Activated B cell treated with CpG ODN at 0.5 μM for 24 hours (primary cell): ENCODE measurements at regions of chr14 and their contacts with region 1.

Region 1: GRCh38 chr14:68788996-68789820 is 3.7 kb downstream of the ZFP36L1 start:
- DNase-seq: peak; percentile 62
- ATAC-seq: no peak
- H3K4me3 Mint-ChIP-seq: peak overlapping the region; percentile 100
- H3K27ac Mint-ChIP-seq: peak overlapping the region; percentile 99
- H3K4me1 Mint-ChIP-seq: peaks cover 54% of the 10 kb centered on the region
- H3K27me3 Mint-ChIP-seq: no peaks in the 10 kb centered on the region
- CTCF ChIP-seq: no peak

Region 2: GRCh38 chr14:68307014-68307789 is 482.0 kb before region 1 on chr14:
- CTCF ChIA-PET with region 1: no interaction called
- POLR2A ChIA-PET with region 1: interaction called, 43 read pairs
- intact Hi-C with region 1: no loop called
- DNase-seq: no peak
- ATAC-seq: no peak
- H3K4me3 Mint-ChIP-seq: no peak overlapping the region
- H3K27ac Mint-ChIP-seq: peak overlapping the region; percentile 84
- H3K4me1 Mint-ChIP-seq: peaks cover 72% of the 10 kb centered on the region
- H3K27me3 Mint-ChIP-seq: no peaks in the 10 kb centered on the region
- CTCF ChIP-seq: no peak

Region 3: GRCh38 chr14:68520637-68521556 is 268.3 kb before region 1 on chr14:
- CTCF ChIA-PET with region 1: no interaction called
- POLR2A ChIA-PET with region 1: interaction called, 585 read pairs
- intact Hi-C with region 1: no loop called
- DNase-seq: no peak
- ATAC-seq: no peak
- H3K4me3 Mint-ChIP-seq: no peak overlapping the region
- H3K27ac Mint-ChIP-seq: no peak overlapping the region
- H3K4me1 Mint-ChIP-seq: peaks cover 56% of the 10 kb centered on the region
- H3K27me3 Mint-ChIP-seq: no peaks in the 10 kb centered on the region
- CTCF ChIP-seq: no peak

Region 4: GRCh38 chr14:68676511-68676943 is 112.7 kb before region 1 on chr14:
- CTCF ChIA-PET with region 1: no interaction called
- POLR2A ChIA-PET with region 1: interaction called, 10 read pairs
- intact Hi-C with region 1: no loop called
- DNase-seq: no peak
- ATAC-seq: no peak
- H3K4me3 Mint-ChIP-seq: no peak overlapping the region
- H3K27ac Mint-ChIP-seq: peak overlapping the region; percentile 61
- H3K4me1 Mint-ChIP-seq: peaks cover 63% of the 10 kb centered on the region
- H3K27me3 Mint-ChIP-seq: no peaks in the 10 kb centered on the region
- CTCF ChIP-seq: no peak

Region 5: DNA sequence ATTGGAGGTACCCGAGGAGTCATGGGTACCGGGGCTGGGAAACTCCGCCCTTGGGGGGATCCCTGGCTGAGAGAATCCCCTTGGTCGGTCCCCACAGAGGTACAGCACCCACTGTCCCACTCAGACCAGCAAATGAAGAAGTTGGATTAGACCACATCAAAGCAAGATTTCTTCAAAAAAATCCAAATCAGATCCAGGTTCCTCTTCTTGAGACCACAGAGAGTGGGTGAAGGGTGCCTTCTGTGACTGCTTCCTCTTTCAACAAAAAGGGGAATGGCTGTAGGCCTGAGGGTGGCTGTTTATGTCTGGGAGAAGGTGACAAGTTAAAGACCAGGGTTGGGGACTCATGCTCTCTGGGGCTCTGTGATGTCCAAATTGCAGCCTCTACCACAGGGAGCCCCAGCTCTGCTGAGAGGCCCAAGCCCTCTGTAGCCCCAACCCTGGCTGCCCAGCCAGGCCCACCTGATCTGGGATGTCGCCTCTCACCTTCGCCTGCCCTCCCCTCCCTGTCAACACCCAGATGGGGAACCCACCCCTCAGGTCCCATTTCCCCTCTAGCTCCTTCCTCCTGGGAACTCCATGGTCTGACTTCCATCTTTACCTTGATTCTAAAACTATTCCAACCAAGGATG is 47.3 kb before region 1 on chr14:
- CTCF ChIA-PET with region 1: no interaction called
- POLR2A ChIA-PET with region 1: interaction called, 28 read pairs
- intact Hi-C with region 1: loop called (anchors 1 kb)
- DNase-seq: peak; percentile 65
- ATAC-seq: peak; percentile 89
- H3K4me3 Mint-ChIP-seq: peak overlapping the region; percentile 32
- H3K27ac Mint-ChIP-seq: peak overlapping the region; percentile 86
- H3K4me1 Mint-ChIP-seq: peaks cover 54% of the 10 kb centered on the region
- H3K27me3 Mint-ChIP-seq: no peaks in the 10 kb centered on the region
- CTCF ChIP-seq: no peak